ENCODE measurements at regions of chr14 and their contacts with region 1.

Region 1: DNA sequence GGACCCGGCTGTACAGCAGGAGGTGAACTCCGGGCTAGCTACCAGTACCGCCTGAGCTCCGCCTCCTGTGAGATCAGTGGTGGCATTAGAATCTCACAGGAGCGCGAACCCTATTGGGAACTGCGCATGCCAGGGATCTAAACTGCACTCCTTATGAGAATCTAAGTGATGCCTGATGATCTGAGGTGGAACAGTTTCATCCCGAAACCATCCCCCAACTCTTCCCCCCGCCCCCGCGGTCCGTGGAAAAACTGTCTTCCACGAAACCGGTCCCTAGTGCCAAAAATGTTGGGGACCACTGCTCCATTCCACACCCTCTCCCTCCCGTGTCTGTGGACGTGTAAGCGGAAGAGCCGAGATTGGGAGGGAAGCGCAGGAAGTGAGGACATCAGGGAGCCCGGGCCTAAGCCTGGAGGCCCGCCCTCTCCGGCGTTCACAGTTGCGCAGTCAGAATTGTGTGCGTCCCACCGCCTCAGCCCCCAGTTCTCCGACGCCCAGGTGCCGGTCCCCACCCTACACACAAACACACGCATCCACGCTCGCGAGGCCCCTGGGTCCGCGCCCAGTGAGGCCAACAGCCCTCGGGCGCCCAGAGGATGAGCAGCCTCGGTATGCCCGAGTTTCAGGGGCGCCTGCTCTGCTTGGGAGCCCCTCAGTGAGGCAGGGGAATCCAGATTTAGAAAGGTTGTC is 1.8 kb upstream of the RNASE4 start:
- DNase-seq: peak; percentile 94

Region 2: GRCh38 chr14:20332788-20333493 is 349.6 kb before region 1 on chr14 and contains the start of gene CCNB1IP1:
- intact Hi-C with region 1: loop called (anchors 5 kb)
- DNase-seq: no peak
- total RNA-seq, gene CCNB1IP1: 61.3 TPM

Region 3: GRCh38 chr14:20461274-20462001 is 221.1 kb before region 1 on chr14 and contains the start of gene PIP4P1:
- intact Hi-C with region 1: loop called (anchors 10 kb)
- DNase-seq: peak; percentile 100
- total RNA-seq, gene PIP4P1: 18.2 TPM

Region 4: DNA sequence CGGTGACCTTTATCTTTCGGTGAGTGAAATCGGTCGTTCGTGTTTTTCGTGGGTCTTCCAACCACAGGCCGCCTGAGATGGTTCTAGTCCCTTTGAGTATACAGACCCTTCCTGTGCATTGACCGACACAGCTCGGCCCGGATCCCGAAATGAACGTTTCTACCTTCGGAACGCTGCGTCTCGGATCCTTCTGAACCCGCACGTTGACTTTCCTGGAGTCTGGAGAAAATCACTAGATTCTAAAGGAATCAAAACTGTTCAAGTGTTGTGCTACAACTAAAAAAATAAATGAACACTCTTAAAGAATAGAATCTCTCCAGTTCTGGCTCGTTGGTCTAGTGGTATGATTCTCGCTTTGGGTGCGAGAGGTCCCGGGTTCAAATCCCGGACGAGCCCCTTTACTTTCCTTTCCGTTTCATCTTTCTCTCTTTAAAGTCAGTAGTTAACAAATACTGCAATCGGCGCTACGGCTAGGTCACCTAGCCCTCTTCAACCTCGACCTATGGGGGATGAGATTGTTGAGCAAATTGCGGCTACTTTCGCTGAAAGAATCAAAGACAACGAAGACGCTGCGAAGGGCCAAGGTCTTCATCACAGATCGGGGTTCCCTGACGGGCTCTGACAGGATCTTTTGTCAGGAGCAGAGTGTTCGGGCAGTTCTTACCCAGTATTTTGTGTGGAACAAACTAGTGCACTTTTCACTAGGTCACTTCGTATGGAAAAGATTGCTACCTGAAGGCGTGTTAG is 49.7 kb before region 1 on chr14:
- intact Hi-C with region 1: loop called (anchors 5 kb)
- DNase-seq: no peak

Region 5: DNA sequence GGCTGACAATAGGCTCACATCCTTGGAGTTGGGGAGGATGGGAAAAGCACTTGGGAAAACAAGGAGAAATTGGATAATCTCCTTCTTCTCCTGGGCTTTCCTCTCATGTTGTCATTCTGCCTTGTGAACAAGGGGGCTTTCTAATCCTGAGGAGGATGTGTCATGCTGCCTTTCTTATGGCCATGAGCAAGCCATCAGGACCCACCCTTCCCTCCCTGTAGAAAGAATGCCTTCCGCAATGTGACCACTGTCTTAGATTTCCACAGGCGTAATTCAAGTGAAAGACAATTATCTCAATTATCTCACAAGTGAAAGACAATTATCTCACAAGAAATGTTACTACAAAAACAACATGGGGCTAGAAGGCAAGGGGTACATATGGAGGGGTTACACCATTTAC is 38.1 kb before region 1 on chr14:
- intact Hi-C with region 1: no loop called
- DNase-seq: no peak

Region 6: DNA sequence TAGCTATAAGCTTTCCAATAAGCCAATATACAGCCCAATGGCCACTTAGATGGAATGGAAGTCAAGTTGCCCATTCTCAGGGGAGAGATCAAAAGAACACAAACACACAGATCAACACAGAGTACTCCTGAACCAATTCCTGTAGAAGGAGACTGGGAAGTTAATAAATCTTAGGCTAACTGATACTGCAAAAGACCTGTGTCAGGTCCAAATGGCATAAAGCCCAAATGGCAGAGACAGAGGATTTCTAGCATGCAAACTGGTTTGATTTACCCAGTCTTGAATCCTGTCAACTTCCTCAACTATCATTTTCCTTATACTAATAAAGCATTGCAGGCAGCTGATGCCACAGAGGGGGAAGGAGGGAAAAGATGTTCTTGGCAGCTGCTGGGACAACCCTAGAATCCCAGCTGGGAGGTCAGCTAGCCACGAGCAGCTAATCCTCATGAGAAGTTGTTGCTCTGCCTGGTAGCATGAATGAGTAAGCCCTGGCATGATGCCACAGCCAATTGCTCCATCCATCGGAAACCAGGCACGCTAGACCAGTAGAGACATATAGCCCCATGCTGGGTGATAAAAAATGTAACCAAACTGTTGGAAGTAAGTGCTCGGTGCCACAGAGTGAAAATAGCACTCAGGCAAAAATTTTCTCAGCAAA is 32.1 kb after region 1 on chr14:
- intact Hi-C with region 1: no loop called
- DNase-seq: peak; percentile 88

Region 7: DNA sequence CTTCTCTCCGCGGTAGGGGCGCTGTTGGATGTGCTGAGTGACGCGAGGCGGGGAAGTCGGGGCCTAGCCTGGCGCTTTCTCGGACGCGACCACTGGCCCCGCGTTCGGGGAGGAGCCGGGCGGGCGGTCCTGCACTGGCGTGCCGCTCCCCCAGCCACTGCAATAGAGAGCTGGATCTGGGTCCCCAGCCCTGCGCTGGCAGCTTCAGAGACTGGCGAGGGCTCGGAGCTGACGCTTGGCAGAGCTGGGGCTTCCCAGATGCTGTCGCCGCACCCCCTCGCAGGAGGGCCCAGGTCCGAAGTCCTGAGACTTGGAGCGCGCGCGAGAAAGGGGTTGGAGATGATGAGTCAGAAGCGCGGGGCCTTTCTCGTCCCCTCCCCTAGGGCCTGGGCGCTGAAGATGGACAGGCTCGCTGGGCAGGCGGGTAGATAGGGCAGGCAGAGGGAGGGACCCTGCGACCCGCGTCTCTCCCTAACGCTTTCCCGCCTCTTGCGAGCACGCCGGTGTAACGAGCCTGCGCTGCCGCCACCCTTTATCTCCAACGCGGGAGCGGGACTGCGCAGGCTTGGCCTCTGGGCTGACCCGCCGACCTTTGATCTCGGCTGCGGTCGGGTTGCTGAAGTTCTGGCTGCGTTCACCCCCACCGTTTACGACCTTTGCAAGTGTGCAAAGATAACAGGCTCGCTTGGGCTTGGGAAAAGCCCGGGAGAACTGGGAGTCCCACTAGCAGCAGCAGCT is 421.3 kb after region 1 on chr14:
- intact Hi-C with region 1: loop called (anchors 5 kb)
- DNase-seq: peak; percentile 97